Psoas muscle (tissue), 8 donors: ENCODE measurements at regions of chrX and their contacts with region 1.

Region 1: DNA sequence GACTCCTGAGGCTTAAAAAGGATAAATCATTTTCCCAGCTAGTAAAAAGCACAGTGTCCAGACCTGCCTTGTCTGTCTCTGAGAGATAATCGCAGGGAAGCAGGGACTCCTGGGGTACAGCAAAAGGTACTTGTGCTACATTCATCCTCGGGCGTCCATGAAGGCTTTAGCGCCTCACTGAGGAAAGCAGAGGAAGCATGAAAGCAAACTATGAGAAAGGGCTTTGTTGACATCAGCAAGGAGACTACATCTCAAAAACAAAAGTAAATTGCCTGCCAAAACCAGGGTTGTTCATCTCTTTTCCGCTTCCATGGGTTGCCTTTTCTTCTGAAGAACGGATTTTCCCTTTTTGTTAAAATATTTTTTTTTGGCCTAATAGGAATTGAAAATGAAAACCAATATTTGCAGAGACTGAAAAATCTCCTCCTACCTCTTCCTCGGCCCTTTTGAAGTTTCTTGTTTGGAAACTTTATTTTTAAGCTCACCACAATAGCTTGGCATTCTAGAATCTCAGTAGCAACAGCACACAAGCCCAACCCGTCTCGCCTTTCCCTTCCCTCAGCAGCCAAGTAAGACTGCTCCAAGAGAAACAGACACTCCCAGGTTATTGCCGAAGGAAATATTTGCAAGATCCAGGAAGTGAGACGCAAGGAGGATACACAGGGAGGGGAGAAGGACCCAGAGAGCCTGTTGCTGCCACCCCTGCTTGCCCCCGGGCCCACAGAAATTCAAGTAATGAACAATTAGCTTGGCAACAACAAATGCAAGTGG is 148.3 kb upstream of the DGKK start:
- DNase-seq: no peak
- ATAC-seq: no peak
- H3K4me3 ChIP-seq: no peak overlapping the region
- H3K27ac ChIP-seq: no peak overlapping the region
- H3K4me1 ChIP-seq: no peaks in the 10 kb centered on the region
- H3K27me3 ChIP-seq: peaks cover 0 to 33% (median 0%) of the 10 kb centered on the region in 3 donors
- CTCF ChIP-seq: no peak

Region 2: GRCh38 chrX:50327235-50327634 is 291.7 kb before region 1 on chrX:
- intact Hi-C with region 1: loop called in 1 of 2 experiments (anchors 10 kb)
- DNase-seq: no peak
- ATAC-seq: no peak
- H3K4me3 ChIP-seq: no peak overlapping the region
- H3K27ac ChIP-seq: no peak overlapping the region
- H3K4me1 ChIP-seq: no peaks in the 10 kb centered on the region
- H3K27me3 ChIP-seq: peaks cover 0 to 7% (median 0%) of the 10 kb centered on the region in 3 donors
- CTCF ChIP-seq: no peak